CD8-positive, alpha-beta T cell (primary cell): ENCODE measurements at regions of chr19 and their contacts with region 1.

Region 1: DNA sequence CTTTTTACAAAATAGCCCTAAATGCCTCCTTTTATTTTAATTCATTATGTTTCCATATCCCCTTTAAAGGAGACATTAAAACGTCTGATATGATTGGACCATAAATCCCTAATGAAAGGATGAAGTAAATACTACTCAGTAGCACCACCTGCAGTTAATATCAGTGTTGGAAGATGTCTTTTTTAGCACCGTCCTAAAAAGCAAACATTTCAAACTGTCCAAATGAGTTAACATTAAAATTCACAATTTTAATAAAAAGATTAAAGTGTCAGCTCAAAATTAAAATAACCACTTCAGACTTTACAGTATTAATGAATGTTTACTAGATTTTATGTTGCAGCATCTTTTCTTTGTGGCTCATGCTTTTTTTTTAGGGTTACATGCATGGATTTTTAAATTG is 12.3 kb downstream of the ZNF507 start:
- DNase-seq: no peak
- ATAC-seq: no peak
- H3K4me3 ChIP-seq: no peak overlapping the region
- H3K4me3 Mint-ChIP-seq: no peak overlapping the region
- H3K27ac ChIP-seq: no peak overlapping the region
- H3K27ac Mint-ChIP-seq: no peak overlapping the region
- H3K4me1 ChIP-seq: peaks cover 9% of the 10 kb centered on the region
- H3K4me1 Mint-ChIP-seq: peaks cover 75% of the 10 kb centered on the region
- H3K27me3 ChIP-seq: no peaks in the 10 kb centered on the region
- H3K27me3 Mint-ChIP-seq: no peaks in the 10 kb centered on the region
- CTCF ChIP-seq: no peak

Region 2: DNA sequence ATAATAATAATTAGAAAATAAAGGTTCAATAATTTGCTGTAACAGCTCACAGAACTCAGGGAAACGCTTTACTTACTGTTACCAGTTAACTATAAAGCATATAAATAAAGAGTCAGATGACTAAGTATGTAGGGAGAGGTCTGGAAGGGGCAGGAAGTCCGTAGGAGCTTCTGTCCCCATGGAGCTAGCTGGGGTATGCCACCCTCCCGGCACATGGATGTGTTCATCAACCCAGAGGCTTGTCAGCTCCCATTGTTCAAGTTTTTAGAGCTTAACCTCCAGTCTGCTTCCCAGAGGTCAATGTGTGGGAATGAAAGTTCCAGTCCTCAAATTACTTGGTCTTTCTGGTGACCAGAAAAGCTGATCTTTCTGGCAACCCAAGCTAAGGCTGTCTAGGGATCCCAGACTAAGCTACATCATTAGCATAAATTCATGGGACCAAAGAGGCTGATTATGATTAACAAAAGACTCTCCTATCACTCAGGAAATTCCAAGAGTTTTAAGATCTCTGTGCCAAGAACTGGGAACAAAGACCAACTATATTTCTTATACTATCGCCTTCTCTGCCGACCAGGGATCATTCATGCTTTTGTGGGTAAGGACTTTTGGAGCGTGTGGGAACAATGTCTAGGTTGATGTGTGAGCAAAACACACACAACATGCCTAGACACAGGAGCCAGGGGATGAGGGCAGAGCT is 44.0 kb before region 1 on chr19:
- CTCF ChIA-PET with region 1: no interaction called
- POLR2A ChIA-PET with region 1: no interaction called
- intact Hi-C with region 1: no loop called
- DNase-seq: no peak
- ATAC-seq: no peak
- H3K4me3 ChIP-seq: no peak overlapping the region
- H3K4me3 Mint-ChIP-seq: no peak overlapping the region
- H3K27ac ChIP-seq: no peak overlapping the region
- H3K27ac Mint-ChIP-seq: no peak overlapping the region
- H3K4me1 ChIP-seq: no peaks in the 10 kb centered on the region
- H3K4me1 Mint-ChIP-seq: no peaks in the 10 kb centered on the region
- H3K27me3 ChIP-seq: peaks cover 0 to 2% of the 10 kb centered on the region in 2 experiments
- H3K27me3 Mint-ChIP-seq: peaks cover 27% of the 10 kb centered on the region
- CTCF ChIP-seq: no peak

Region 3: GRCh38 chr19:32339988-32340874 is 17.5 kb before region 1 on chr19:
- CTCF ChIA-PET with region 1: interaction called, 16 read pairs
- POLR2A ChIA-PET with region 1: no interaction called
- intact Hi-C with region 1: no loop called
- DNase-seq: peak; percentile 4 to 61 (median 43)
- ATAC-seq: peak; percentile 57
- H3K4me3 ChIP-seq: no peak overlapping the region
- H3K4me3 Mint-ChIP-seq: no peak overlapping the region
- H3K27ac ChIP-seq: no peak overlapping the region
- H3K27ac Mint-ChIP-seq: no peak overlapping the region
- H3K4me1 ChIP-seq: no peaks in the 10 kb centered on the region
- H3K4me1 Mint-ChIP-seq: no peaks in the 10 kb centered on the region
- H3K27me3 ChIP-seq: no peaks in the 10 kb centered on the region
- H3K27me3 Mint-ChIP-seq: no peaks in the 10 kb centered on the region
- CTCF ChIP-seq: peak; percentile 55